Heart right ventricle (tissue), 16 donors: ENCODE measurements at regions of chr2 and their contacts with region 1.

Region 1: DNA sequence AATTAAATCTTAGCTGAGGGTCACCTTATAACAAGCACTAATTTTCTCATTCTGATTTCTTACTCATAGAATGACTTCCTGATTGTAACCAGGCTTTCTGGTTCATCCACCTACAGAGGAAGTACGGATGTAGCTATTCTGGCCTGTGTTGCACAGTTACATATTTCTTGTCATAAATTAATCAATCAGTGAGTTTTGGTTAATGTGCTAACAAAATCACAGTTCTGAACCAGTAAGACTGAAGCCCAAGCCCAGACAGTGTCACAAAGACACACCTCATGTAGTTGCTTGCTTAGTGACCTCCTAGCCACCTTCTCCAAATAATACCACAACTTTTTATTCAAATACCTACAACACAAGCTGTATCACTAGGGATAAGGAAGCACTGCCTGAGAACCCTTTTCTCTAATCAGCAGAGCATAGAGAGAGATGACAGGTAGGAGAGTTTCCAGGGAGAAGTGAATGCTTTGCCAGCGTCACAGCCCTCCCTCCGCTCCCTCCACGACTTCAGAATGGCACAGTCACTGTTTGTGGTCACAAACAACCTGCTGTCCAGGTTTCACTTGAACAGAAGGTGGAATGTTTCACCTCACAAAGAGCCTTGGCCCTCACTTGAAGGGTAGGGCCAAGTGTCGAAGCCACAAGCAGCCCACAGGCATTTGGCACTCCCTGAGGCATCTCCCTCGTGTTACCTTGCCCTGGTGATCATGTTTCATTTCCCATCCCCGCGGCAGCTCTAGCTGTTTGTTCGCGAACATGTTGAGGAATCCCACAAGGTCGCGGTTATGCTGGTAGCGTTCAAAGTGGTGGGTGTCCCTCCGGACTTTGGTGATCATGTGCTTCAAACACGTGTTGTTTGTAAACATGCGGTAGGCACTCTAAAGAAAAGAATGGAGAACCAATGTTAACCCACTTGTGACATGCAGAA is 120.8 kb upstream of the STK17B start:
- DNase-seq: no peak
- ATAC-seq: peak in 6 of 8 donors; percentile 26 to 86 (median 36)
- H3K4me3 ChIP-seq: no peak overlapping the region
- H3K27ac ChIP-seq: peak overlapping the region in 7 of 10 donors; percentile 20 to 69 (median 49)
- H3K4me1 ChIP-seq: peaks cover 0 to 64% (median 36%) of the 10 kb centered on the region in 9 donors
- H3K27me3 ChIP-seq: no peaks in the 10 kb centered on the region
- CTCF ChIP-seq: no peak

Region 2: GRCh38 chr2:195995499-195995898 is 296.6 kb before region 1 on chr2:
- intact Hi-C with region 1: no loop called
- DNase-seq: no peak
- ATAC-seq: no peak
- H3K4me3 ChIP-seq: no peak overlapping the region
- H3K27ac ChIP-seq: no peak overlapping the region
- H3K4me1 ChIP-seq: no peaks in the 10 kb centered on the region
- H3K27me3 ChIP-seq: no peaks in the 10 kb centered on the region
- CTCF ChIP-seq: no peak

Region 3: DNA sequence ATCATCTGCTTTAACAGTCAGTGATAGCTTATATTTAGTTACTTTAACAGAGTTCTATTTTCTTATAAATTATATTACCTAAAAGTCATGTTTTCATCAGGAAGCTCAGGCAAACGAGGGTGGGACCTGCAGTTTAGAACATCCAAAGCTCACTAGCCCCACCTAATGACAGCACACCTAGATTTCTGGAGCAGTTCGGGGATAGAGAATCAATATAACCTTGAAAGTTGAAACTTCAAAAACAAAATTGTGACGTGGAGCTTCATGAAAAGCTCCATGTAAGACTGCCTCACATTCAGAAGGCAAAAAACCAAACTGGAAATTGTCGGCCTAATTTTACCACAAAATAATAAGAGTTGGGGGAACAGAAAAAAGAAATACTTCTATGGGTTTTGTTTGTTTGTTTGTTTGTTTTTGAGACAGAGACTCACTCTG is 161.5 kb after region 1 on chr2:
- intact Hi-C with region 1: loop called in 4 of 10 experiments (anchors 2 to 5 kb)
- DNase-seq: peak in 1 of 2 donors; percentile 67
- ATAC-seq: peak in 7 of 8 donors; percentile 47 to 80 (median 71)
- H3K4me3 ChIP-seq: no peak overlapping the region
- H3K27ac ChIP-seq: peak overlapping the region in 1 of 10 donors; percentile 18
- H3K4me1 ChIP-seq: peaks cover 0 to 17% (median 8%) of the 10 kb centered on the region in 9 donors
- H3K27me3 ChIP-seq: peaks cover 0 to 4% (median 0%) of the 10 kb centered on the region in 7 donors
- CTCF ChIP-seq: peak; percentile 33 to 82 (median 71)

Region 4: DNA sequence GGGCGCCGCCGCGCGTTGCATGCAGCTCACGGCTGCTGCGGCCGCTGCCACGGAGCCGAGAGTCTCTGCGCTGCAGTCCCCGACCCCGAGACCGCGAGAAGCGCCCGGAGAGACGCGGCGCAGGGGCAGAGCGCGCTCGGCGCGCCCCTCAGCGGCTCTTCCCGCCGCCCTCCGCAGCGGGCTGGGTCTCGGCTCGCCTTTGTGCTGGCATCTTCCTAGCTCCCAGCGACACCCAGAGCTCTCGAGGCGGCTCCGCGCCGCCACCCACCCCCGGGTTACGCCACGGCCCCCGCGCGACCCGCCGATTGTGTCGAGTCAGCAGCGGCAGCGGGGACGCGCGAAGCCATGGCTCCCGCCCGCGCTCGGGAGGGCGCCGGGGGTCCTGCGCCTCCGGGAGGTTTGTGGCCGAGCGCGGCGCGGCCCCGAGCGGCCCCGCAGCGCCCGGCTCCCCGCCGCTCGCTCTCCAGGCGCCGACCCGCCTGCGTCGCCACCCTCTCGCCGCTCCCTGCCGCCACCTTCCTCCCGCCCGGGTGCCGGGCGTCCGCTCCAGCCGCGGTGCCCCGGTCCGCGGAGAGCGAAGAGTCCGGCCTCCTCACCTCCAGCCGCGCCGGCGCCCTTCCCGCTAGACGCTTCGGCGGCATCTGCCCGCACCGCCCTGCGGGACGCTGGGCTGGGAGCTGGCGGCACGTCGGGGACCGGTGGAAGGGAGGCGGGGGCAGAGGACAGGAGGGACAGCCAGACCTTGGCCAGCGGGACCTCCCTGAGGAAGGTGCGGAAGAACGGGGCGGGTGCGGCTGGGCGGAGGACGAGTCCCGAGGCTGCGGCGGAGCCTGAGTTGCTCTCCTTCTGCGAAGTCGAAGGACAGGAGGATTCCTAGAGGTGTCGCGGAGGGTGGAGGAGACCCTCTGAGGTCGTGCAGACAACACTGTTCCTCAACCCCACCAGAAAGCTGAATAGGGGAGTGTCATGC is 301.1 kb after region 1 on chr2:
- intact Hi-C with region 1: loop called in 1 of 10 experiments (anchors 10 kb)
- DNase-seq: peak; percentile 35 to 44
- ATAC-seq: peak; percentile 67 to 89 (median 78)
- H3K4me3 ChIP-seq: peak within 1 kb of the TSS; percentile 47 to 79 (median 71)
- H3K27ac ChIP-seq: peak within 1 kb of the TSS; percentile 58 to 93 (median 84)
- H3K4me1 ChIP-seq: peaks cover 0 to 18% (median 6%) of the 10 kb centered on the region in 9 donors
- H3K27me3 ChIP-seq: peaks cover 0 to 58% (median 4%) of the 10 kb centered on the region in 7 donors
- CTCF ChIP-seq: peak in 4 of 9 donors; percentile 16 to 43 (median 30)

Region 5: DNA sequence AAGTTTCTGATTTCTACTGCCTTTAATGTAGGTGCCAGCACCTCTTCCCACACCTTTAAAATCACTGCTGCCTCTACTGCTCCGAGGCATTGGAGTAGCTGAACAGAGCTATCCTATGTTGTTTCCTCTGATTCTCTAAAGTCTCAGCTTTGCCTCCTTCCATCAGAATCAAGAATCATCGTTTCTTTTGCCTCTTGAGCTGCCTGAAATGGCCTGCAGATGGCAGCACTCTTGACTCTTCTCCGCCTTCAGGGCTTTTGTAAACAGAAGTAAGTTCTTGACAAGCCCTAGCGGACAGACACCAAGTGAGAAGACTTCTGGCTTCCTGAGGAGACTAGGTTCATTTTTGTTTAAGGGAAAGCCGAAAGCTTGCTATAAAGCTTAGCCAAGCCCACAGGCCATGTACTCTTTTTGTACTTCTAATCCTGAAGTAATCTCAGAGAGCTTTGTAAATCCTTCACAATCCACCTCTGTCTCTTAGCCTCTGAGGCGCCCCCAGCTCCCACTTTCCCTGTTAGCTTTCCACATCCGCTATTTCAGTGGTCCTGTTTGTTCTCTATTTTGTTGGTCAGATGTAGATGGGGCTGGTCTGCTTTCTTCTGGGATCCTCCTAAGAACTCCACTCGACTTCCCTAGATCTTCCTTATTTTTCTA is 459.0 kb after region 1 on chr2:
- intact Hi-C with region 1: loop called in 3 of 10 experiments (anchors 5 to 10 kb)
- DNase-seq: peak; percentile 39 to 46
- ATAC-seq: peak in 6 of 8 donors; percentile 53 to 80 (median 66)
- H3K4me3 ChIP-seq: peak overlapping the region in 1 of 10 donors; percentile 24
- H3K27ac ChIP-seq: no peak overlapping the region
- H3K4me1 ChIP-seq: peaks cover 0 to 7% (median 0%) of the 10 kb centered on the region in 9 donors
- H3K27me3 ChIP-seq: no peaks in the 10 kb centered on the region
- CTCF ChIP-seq: peak; percentile 39 to 84 (median 81)

Region 6: DNA sequence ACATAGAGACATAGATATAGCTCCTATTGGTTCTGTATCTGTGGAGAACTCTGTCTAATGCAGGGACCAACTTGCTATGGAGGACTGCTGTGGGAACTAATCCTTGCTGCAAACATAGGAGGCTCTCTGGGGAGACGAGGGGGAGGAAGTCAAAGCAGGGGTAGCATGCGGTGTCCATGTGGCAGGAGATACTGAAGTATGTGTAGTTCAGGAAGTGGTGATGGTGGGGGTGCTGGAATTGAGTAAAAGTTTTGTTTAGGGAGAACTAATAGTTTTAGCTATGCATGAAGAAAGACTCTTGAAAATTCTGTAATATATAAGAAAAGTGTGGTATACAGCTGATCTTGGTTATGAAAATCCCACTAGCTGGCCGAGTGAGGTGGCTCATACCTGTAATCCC is 956.5 kb after region 1 on chr2:
- intact Hi-C with region 1: no loop called
- DNase-seq: no peak
- ATAC-seq: no peak
- H3K4me3 ChIP-seq: no peak overlapping the region
- H3K27ac ChIP-seq: peak overlapping the region in 1 of 10 donors; percentile 36
- H3K4me1 ChIP-seq: peaks cover 0 to 63% (median 0%) of the 10 kb centered on the region in 9 donors
- H3K27me3 ChIP-seq: no peaks in the 10 kb centered on the region
- CTCF ChIP-seq: no peak